HepG2 (cell line): ENCODE measurements at regions of chr15 and their contacts with region 1.

Region 1: GRCh38 chr15:75042730-75043508 is 19.5 kb downstream of the PPCDC start:
- DNase-seq: peak; percentile 93
- ATAC-seq: peak; percentile 77
- H3K4me3 ChIP-seq: peak overlapping the region in 1 of 3 experiments; percentile 45; a peak in 2 of 6 replicates
- H3K27ac ChIP-seq: peak overlapping the region; percentile 79
- H3K4me1 ChIP-seq: peaks cover 76% of the 10 kb centered on the region
- H3K27me3 ChIP-seq: no peaks in the 10 kb centered on the region
- CTCF ChIP-seq: peak; percentile 99
- EP300 ChIP-seq: peak in 1 of 2 experiments; percentile 69; a peak in 3 of 4 replicates
- POLR2A ChIP-seq: no peak; a peak in 1 of 4 replicates
- RAD21 ChIP-seq: peak; percentile 98

Region 2: GRCh38 chr15:74995241-74995778 is 47.6 kb before region 1 on chr15 and contains the start of gene SCAMP5:
- CTCF ChIA-PET with region 1: no interaction called
- POLR2A ChIA-PET with region 1: no interaction called
- in situ Hi-C with region 1: no loop called
- intact Hi-C with region 1: no loop called
- DNase-seq: peak; percentile 90
- ATAC-seq: peak; percentile 76
- H3K4me3 ChIP-seq: peak within 1 kb of the TSS; percentile 79 to 96 (median 95)
- H3K27ac ChIP-seq: peak within 1 kb of the TSS; percentile 71
- H3K4me1 ChIP-seq: peaks cover 21% of the 10 kb centered on the region
- H3K27me3 ChIP-seq: 0 out of 5 replicates have a peak, but pooled peaks cover 0 to 3% of the 10 kb centered on the region in 2 experiments
- CTCF ChIP-seq: no peak
- EP300 ChIP-seq: peak; percentile 18 to 27; a peak in 1 of 4 replicates
- POLR2A ChIP-seq: peak; percentile 40 to 62; a peak in 1 of 4 replicates
- RAD21 ChIP-seq: no peak
- total RNA-seq, gene SCAMP5: 31.1 and 34.3 TPM in 2 replicates

Region 3: DNA sequence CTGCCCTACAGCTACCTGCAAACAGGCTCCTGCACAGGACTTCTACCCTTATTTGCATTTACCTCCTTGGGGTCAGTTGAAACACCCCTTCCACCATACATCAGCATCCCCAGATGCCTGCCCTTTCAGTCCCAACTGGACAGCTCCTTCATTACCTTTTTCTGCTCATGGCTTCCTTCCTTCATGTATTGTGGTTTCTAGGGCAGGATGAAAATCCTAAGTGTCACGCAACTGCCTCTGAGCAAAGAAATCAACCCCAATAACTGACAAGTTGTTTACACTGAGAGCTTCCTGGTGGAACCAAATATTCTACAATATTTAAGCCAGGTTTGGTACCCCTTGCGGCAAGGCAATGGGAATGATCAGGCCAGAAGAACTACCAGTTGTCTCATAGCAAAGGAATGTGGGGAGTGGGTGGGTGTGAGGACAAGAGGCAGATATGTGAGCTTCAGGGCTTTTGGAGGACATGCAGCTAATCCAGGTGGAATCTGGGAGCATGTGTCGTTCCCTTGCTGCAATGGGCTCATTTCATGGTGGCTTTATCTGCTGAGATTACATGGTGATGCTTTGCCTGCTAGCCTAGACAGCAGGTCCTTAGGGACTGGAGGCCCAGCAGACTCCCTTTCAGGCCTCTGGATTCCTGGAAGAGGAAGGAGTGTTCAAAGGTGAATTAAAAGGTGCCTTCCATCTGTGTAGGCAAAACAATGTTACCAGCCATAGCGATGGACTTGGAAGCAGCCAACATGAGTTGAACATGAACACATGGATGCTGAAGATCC is 15.4 kb after region 1 on chr15:
- CTCF ChIA-PET with region 1: no interaction called
- POLR2A ChIA-PET with region 1: interaction called, 21 read pairs
- in situ Hi-C with region 1: no loop called
- intact Hi-C with region 1: no loop called
- DNase-seq: peak; percentile 61
- ATAC-seq: peak; percentile 20; the same call in 1 of the 3 replicates
- H3K4me3 ChIP-seq: no peak overlapping the region
- H3K27ac ChIP-seq: peak overlapping the region; percentile 42
- H3K4me1 ChIP-seq: peaks cover 74% of the 10 kb centered on the region
- H3K27me3 ChIP-seq: no peaks in the 10 kb centered on the region
- CTCF ChIP-seq: no peak
- EP300 ChIP-seq: no peak
- POLR2A ChIP-seq: no peak
- RAD21 ChIP-seq: no peak

Region 4: GRCh38 chr15:75123395-75123794 is 80.5 kb after region 1 on chr15:
- CTCF ChIA-PET with region 1: no interaction called
- POLR2A ChIA-PET with region 1: no interaction called
- in situ Hi-C with region 1: no loop called
- intact Hi-C with region 1: loop called (anchors 5 kb)
- DNase-seq: no peak
- ATAC-seq: no peak
- H3K4me3 ChIP-seq: no peak overlapping the region
- H3K27ac ChIP-seq: peak overlapping the region; percentile 42
- H3K4me1 ChIP-seq: peaks cover 40% of the 10 kb centered on the region
- H3K27me3 ChIP-seq: no peaks in the 10 kb centered on the region
- CTCF ChIP-seq: no peak
- EP300 ChIP-seq: no peak
- POLR2A ChIP-seq: no peak
- RAD21 ChIP-seq: no peak

Region 5: DNA sequence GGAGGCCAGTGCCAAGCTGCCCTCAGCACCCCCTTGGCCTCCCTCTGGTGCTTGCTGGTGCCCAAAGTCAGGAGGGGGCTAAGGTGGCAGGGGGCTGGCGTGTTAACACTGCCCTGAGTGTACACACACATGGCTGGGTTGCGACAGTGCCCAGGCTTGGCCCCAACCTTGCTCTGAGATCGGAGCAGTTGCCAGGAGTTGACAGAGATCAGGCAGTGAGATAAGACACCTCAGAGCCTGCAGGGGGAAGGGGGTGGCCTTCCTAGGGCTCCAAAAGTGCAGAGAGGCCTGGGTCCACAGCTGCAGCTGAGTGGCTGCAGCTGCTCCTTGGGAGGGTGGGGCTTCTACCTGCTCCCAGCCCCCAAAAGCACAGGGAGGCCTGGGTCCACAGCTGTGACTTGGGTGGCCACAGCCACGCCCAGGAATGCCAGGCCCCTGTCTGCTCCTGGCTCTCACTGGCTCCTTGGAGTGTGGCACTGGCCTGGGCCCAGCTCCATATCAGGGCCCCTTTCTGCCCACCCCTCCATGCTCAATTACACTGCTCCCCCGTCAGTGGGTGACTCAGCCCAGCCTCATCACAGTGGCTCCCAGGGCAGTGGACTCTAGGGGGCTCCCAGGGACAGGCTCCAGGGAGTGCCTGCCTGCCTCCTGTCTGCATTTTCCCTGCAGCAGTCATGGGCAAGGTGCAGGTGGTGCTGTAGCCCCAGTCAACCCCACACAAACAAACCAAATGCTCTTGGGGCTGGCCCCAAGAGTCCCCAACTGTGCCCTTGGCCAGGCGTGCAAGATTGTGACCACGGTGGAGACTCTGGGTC is 102.3 kb after region 1 on chr15:
- CTCF ChIA-PET with region 1: interaction called, 4 read pairs
- POLR2A ChIA-PET with region 1: interaction called, 58 read pairs
- in situ Hi-C with region 1: no loop called
- intact Hi-C with region 1: loop called (anchors 1 kb)
- DNase-seq: peak; percentile 84
- ATAC-seq: peak; percentile 98
- H3K4me3 ChIP-seq: peak overlapping the region in 1 of 3 experiments; percentile 40; a peak in 1 of 6 replicates
- H3K27ac ChIP-seq: peak overlapping the region; percentile 71
- H3K4me1 ChIP-seq: peaks cover 66% of the 10 kb centered on the region
- H3K27me3 ChIP-seq: no peaks in the 10 kb centered on the region
- CTCF ChIP-seq: peak; percentile 94
- EP300 ChIP-seq: peak in 1 of 2 experiments; percentile 50; a peak in 1 of 4 replicates
- POLR2A ChIP-seq: no peak
- RAD21 ChIP-seq: peak; percentile 95

Region 6: DNA sequence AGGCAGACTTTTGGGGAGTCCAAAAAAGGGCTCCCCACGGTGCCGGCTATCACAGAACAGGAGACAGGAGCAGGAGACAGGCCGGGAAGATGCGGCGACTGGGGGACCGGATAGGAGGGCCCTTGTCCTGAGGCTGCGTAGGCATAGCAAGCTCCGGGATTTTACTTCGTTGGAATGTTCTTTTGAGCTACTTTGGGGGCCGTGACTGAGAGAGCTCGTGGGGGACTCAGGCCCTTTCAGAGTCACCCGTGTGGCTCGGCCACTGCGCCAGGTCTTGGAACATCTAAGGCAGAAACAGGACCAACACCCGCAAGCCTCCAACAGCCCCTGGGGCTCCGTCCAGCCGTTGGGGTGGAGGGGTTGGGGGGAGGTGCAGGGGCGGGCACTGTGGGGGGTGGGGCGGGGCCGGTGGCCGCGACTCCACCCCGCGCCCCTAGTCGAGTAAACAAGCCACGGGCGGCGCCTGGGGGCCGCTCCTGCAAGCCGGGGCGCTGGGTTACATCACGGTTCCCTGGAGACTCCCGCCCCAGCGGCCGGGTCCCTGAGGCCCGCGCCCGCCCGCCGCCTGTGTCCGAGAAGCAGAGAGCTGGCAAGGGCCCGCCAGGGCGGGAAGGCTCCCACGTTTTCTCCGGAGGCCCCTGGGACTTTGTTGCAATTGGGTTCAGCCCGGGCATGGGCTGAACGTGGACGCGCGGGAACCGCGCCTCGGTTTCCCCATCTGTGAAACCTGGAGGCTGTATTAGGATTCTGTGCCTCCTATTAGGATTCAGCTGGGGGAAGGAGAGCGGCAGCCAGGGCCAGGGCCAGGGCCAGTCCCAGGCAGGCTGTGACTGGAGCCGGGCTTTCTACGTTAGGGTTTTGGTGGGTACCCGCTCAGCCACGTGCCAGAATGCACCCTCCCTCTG is 135.5 kb after region 1 on chr15:
- CTCF ChIA-PET with region 1: interaction called, 6 read pairs
- POLR2A ChIA-PET with region 1: interaction called, 34 read pairs
- in situ Hi-C with region 1: no loop called
- intact Hi-C with region 1: loop called (anchors 1 kb)
- DNase-seq: peak; percentile 75
- ATAC-seq: peak; percentile 72
- H3K4me3 ChIP-seq: peak overlapping the region; percentile 46 to 68 (median 55)
- H3K27ac ChIP-seq: peak overlapping the region; percentile 56
- H3K4me1 ChIP-seq: peaks cover 94% of the 10 kb centered on the region
- H3K27me3 ChIP-seq: no peaks in the 10 kb centered on the region
- CTCF ChIP-seq: peak; percentile 18
- EP300 ChIP-seq: peak in 1 of 2 experiments; percentile 61; a peak in 1 of 4 replicates
- POLR2A ChIP-seq: peak in 1 of 2 experiments; percentile 47; a peak in 2 of 4 replicates
- RAD21 ChIP-seq: peak; percentile 18; the same call in 1 of the 2 replicates

Region 7: DNA sequence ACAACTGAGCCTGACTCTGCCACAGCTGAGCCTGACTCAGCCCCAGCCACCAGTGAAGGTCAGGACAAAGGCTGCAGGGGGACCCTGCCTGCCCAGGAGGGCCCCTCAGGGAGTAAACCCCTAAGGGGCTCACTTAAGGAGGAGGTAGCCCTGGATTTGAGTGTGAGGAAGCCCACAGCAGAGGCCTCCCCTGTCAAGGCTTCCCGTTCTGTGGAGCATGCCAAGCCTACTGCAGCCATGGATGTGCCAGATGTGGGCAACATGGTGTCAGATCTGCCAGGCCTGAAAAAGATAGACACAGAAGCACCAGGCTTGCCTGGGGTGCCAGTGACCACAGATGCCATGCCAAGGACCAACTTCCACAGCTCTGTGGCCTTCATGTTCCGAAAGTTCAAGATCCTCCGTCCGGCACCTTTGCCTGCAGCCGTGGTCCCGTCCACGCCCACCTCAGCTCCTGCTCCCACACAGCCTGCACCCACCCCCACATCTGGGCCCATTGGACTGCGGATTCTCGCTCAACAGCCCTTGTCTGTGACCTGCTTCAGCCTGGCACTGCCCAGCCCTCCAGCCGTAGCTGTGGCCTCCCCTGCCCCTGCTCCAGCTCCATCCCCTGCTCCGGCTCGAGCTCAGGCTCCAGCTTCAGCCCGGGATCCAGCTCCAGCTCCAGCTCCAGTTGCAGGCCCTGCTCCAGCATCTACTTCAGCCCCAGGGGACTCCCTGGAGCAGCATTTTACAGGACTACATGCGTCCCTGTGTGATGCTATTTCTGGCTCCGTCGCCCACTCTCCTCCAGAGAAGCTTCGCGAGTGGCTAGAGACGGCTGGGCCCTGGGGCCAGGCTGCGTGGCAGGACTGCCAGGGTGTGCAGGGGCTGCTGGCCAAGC is 164.9 kb after region 1 on chr15:
- CTCF ChIA-PET with region 1: interaction called, 54 read pairs
- POLR2A ChIA-PET with region 1: interaction called, 60 read pairs
- in situ Hi-C with region 1: no loop called
- intact Hi-C with region 1: loop called (anchors 1 kb)
- DNase-seq: no peak
- ATAC-seq: no peak
- H3K4me3 ChIP-seq: no peak overlapping the region
- H3K27ac ChIP-seq: no peak overlapping the region
- H3K4me1 ChIP-seq: peaks cover 45% of the 10 kb centered on the region
- H3K27me3 ChIP-seq: no peaks in the 10 kb centered on the region; a peak in 1 of 5 replicates
- CTCF ChIP-seq: no peak
- EP300 ChIP-seq: no peak
- POLR2A ChIP-seq: no peak
- RAD21 ChIP-seq: no peak